ENCODE measurements at regions of chr6 and their contacts with region 1.

Region 1: DNA sequence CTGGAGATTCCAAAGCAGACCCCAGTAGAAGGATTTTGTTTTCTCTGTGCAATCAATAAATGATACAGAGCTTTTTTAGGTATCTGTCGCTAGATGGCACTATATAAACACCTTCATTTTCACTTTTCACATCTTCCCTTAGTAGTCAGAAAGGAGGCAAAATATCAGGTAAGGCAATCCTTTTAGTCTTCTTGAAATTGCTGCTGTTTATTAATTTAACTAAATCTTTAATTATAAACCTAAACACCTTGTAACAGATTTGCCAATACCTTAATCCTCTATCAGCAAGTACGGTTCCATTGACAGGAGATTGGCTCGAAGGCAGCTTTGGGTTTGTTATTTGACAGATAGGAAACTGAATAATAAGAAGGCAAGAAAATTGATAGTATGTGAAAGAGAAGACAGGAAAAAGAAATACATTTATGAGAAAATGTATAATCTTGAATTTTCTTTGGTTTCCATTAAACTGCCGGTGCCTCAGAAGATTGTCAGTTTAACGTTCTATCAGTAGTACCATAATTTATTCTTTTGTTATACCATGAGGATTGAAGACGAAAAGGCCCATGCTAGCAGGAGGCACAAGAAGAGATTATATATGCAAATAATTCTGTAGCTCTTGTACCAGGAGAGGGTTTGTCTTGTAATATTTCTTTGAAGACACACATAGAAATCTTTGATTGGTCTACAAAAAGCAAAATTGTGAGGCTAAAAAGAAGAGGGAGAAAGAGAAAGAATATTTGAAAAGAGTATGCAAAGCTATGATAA is 23.5 kb upstream of the IBTK start:
- DNase-seq: peak in 4 of 5 donors; percentile 37 to 52 (median 40)
- H3K4me3 ChIP-seq: no peak overlapping the region
- H3K4me3 Mint-ChIP-seq: no peak overlapping the region
- H3K27ac ChIP-seq: no peak overlapping the region
- H3K27ac Mint-ChIP-seq: peak overlapping the region in 1 of 7 donors; percentile 37
- H3K4me1 ChIP-seq: no peaks in the 10 kb centered on the region
- H3K4me1 Mint-ChIP-seq: peaks cover 0 to 1% (median 0%) of the 10 kb centered on the region in 4 donors
- H3K27me3 ChIP-seq: no peaks in the 10 kb centered on the region
- H3K27me3 Mint-ChIP-seq: peaks cover 0 to 3% of the 10 kb centered on the region in 2 donors

Region 2: GRCh38 chr6:82205930-82206392 is 65.1 kb before region 1 on chr6:
- CTCF ChIA-PET with region 1: no interaction called
- POLR2A ChIA-PET with region 1: no interaction called
- intact Hi-C with region 1: no loop called
- DNase-seq: no peak
- H3K4me3 ChIP-seq: no peak overlapping the region
- H3K4me3 Mint-ChIP-seq: no peak overlapping the region
- H3K27ac ChIP-seq: no peak overlapping the region
- H3K27ac Mint-ChIP-seq: peak overlapping the region in 3 of 7 donors; percentile 18 to 52 (median 25)
- H3K4me1 ChIP-seq: no peaks in the 10 kb centered on the region
- H3K4me1 Mint-ChIP-seq: peaks cover 3 to 13% (median 4%) of the 10 kb centered on the region in 4 donors
- H3K27me3 ChIP-seq: no peaks in the 10 kb centered on the region
- H3K27me3 Mint-ChIP-seq: no peaks in the 10 kb centered on the region

Region 3: GRCh38 chr6:82283771-82284410 is 12.8 kb after region 1 on chr6:
- CTCF ChIA-PET with region 1: interaction called, 14 read pairs
- POLR2A ChIA-PET with region 1: no interaction called
- intact Hi-C with region 1: no loop called
- DNase-seq: no peak
- H3K4me3 ChIP-seq: no peak overlapping the region
- H3K4me3 Mint-ChIP-seq: no peak overlapping the region
- H3K27ac ChIP-seq: no peak overlapping the region
- H3K27ac Mint-ChIP-seq: no peak overlapping the region
- H3K4me1 ChIP-seq: peaks cover 32% of the 10 kb centered on the region
- H3K4me1 Mint-ChIP-seq: peaks cover 28 to 47% (median 38%) of the 10 kb centered on the region in 4 donors
- H3K27me3 ChIP-seq: no peaks in the 10 kb centered on the region
- H3K27me3 Mint-ChIP-seq: peaks cover 0 to 2% of the 10 kb centered on the region in 2 donors

Region 4: DNA sequence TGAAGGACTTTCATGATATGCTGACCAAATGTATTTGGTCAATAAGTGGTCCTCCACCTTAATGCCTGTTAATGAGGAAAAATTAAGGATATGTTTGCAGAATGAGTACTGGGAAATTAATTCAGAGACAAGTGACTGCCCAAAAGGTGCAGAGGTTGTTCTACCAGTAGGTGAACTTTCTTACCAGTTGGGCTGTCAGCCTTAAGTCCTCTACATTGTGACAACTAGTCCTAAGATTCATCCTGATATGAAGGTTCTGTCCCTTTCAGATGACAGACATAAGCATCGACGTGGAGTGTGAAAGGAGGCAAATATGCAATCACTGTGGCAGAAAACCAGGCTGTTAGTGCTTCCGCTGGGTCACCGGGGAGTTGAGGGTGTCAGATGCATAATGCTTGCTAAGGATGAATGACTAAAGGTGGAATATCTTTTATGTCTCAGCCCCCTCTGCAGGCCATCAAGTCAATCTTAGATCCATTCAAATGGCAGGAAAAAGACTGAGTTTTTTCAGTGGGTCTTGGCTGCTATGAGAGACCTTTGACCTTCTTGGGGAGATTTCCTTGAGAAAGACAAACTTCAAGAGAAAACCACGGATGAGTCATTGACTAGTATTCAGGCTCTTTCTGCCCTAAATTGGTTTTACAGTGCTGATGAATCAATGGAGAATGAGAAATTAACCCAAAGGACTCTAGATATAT is 318.6 kb after region 1 on chr6:
- CTCF ChIA-PET with region 1: no interaction called
- POLR2A ChIA-PET with region 1: no interaction called
- intact Hi-C with region 1: loop called (anchors 2 kb)
- DNase-seq: peak in 2 of 5 donors; percentile 7 to 9
- H3K4me3 ChIP-seq: no peak overlapping the region
- H3K4me3 Mint-ChIP-seq: no peak overlapping the region
- H3K27ac ChIP-seq: no peak overlapping the region
- H3K27ac Mint-ChIP-seq: no peak overlapping the region
- H3K4me1 ChIP-seq: no peaks in the 10 kb centered on the region
- H3K4me1 Mint-ChIP-seq: peaks cover 0 to 5% (median 0%) of the 10 kb centered on the region in 4 donors
- H3K27me3 ChIP-seq: no peaks in the 10 kb centered on the region
- H3K27me3 Mint-ChIP-seq: peaks cover 0 to 2% of the 10 kb centered on the region in 2 donors

Region 5: DNA sequence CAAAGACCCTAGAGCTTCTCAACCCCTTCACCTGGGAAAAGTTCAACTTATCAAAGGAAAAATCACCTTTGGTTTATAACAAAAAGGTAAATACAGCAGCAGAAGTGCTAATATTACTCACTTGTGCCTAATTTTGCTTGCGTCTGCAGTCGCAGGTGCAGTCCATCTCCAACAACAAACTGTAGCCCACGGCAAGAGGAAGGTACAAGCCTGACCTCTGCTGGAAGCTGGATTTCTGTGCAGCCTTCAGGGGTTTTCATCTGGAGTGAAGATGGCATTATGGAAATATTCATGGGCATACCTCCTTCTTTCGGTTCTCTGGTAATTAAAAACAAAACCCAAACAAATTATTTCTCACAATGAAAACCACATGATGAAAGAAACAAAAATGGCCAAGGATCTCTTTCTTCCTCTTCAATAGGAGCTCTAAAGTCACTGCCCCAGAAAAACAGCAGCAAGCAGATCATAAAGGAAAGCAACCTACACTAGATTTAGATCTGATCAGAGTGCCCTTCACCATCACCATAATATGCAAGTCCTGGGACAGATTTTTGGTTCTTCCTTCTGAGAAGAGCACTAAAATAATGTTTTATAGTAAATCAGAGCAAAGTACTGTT is 786.8 kb after region 1 on chr6:
- CTCF ChIA-PET with region 1: interaction called, 98 read pairs
- POLR2A ChIA-PET with region 1: no interaction called
- intact Hi-C with region 1: loop called (anchors 1 kb)
- DNase-seq: peak in 2 of 5 donors; percentile 18
- H3K4me3 ChIP-seq: no peak overlapping the region
- H3K4me3 Mint-ChIP-seq: no peak overlapping the region
- H3K27ac ChIP-seq: no peak overlapping the region
- H3K27ac Mint-ChIP-seq: peak overlapping the region in 1 of 7 donors; percentile 19
- H3K4me1 ChIP-seq: no peaks in the 10 kb centered on the region
- H3K4me1 Mint-ChIP-seq: peaks cover 0 to 14% (median 6%) of the 10 kb centered on the region in 4 donors
- H3K27me3 ChIP-seq: no peaks in the 10 kb centered on the region
- H3K27me3 Mint-ChIP-seq: no peaks in the 10 kb centered on the region

Region 6: DNA sequence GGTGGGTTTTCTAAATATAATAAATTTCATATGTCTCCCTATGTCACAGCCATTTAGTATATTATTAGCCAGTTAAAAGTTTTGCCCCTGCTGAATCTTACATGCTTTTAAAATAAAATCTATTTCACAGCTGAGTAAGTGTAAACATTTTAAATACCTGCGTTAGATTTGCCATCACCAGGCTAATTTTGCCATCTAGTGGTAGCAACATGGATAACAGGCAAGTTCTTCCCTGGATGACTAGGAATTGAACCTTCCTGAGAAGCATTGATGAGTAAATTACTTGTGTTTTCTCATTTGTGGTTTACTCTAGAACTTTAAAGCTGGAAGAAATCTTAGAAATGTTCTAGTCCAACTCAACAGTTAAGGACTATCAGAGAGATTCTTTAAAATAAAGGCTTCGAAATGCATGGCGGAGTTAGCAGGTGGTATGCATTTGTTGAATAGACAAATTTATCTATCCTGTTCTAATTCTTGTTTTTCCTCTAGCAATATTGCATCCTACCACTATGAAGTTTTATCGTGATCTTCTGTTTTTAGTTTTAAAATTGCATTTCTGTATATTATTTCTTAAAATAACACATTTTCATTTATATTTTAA is 1243.9 kb after region 1 on chr6:
- CTCF ChIA-PET with region 1: interaction called, 18 read pairs
- POLR2A ChIA-PET with region 1: no interaction called
- intact Hi-C with region 1: loop called (anchors 2 kb)
- DNase-seq: peak in 4 of 5 donors; percentile 23 to 31 (median 26)
- H3K4me3 ChIP-seq: no peak overlapping the region
- H3K4me3 Mint-ChIP-seq: no peak overlapping the region
- H3K27ac ChIP-seq: no peak overlapping the region
- H3K27ac Mint-ChIP-seq: no peak overlapping the region
- H3K4me1 ChIP-seq: no peaks in the 10 kb centered on the region
- H3K4me1 Mint-ChIP-seq: peaks cover 6 to 18% (median 13%) of the 10 kb centered on the region in 4 donors
- H3K27me3 ChIP-seq: no peaks in the 10 kb centered on the region
- H3K27me3 Mint-ChIP-seq: peaks cover 25 to 35% of the 10 kb centered on the region in 2 donors